GM23248 (cell line): ENCODE measurements at regions of chr6 and their contacts with region 1.

Region 1: GRCh38 chr6:167907837-167908681 is 81.3 kb downstream of the AFDN start:
- DNase-seq: peak; percentile 47
- H3K4me3 ChIP-seq: no peak overlapping the region
- H3K27ac ChIP-seq: no peak overlapping the region
- H3K4me1 ChIP-seq: no peaks in the 10 kb centered on the region
- H3K27me3 ChIP-seq: no peaks in the 10 kb centered on the region

Region 2: DNA sequence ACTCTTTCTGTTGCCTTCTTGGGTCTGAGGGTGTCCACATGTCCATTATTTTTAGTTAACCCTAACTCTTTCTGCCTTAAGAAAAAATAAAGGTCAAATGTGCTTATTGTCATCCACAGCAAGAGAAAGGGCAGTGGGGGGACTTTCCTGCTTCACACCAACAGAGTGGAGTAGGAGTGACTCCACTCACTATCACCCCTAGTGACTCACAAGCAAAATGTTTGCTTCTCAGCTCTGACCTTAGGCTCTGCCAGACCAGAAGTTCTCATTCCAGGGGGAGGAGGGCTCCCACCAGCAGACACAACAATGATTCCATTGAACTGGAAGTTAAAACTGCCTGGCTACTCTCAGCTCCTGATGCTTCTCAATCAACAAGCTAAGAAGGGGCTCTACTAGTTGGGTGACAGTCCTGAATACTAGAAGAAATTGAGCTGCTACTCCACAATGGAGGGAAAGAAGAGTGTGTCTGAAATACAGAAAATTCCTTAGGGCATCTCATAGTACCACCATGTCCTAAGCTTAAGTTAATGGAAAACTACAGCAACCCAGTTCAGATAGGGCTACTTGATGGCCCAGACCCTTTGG is 165.2 kb before region 1 on chr6:
- in situ Hi-C with region 1: no loop called
- DNase-seq: no peak
- H3K4me3 ChIP-seq: no peak overlapping the region
- H3K27ac ChIP-seq: no peak overlapping the region
- H3K4me1 ChIP-seq: no peaks in the 10 kb centered on the region
- H3K27me3 ChIP-seq: no peaks in the 10 kb centered on the region

Region 3: DNA sequence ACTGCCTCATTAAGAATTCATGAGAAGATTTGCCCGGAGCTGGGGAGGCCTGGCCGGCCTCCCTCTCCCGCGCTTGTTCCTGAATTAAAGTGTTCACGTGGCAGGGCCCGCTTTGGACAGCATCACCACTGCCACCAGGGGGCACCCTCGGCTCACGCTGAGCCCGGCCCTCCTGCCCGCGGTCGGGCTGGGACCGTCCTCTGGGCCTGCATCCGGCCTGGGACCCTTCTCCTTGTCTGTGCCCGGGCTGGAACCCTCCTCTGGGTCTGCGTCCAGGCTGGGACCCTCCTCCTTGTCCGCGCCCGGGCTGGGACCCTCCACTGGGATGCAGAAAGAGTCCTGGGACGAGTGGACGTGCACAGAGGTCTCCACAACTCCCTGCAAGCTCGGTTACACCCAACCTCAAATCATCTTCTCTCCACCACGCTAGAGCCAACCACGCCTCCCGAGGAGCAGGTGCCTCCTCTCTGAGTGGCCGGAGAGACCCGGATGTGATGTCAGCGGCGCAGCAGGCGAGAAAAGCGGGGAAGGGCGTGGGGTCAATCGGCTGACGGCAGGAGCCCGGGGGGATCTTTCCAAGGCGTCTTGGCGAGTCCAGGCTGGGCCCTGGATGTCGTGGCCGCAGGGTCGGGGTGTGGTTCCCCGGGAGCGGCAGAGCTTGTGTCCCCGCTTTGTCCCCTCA is 462.4 kb after region 1 on chr6:
- in situ Hi-C with region 1: loop called (anchors 25 kb)
- DNase-seq: peak; percentile 55
- H3K4me3 ChIP-seq: no peak overlapping the region
- H3K27ac ChIP-seq: no peak overlapping the region
- H3K4me1 ChIP-seq: no peaks in the 10 kb centered on the region
- H3K27me3 ChIP-seq: no peaks in the 10 kb centered on the region

Region 4: DNA sequence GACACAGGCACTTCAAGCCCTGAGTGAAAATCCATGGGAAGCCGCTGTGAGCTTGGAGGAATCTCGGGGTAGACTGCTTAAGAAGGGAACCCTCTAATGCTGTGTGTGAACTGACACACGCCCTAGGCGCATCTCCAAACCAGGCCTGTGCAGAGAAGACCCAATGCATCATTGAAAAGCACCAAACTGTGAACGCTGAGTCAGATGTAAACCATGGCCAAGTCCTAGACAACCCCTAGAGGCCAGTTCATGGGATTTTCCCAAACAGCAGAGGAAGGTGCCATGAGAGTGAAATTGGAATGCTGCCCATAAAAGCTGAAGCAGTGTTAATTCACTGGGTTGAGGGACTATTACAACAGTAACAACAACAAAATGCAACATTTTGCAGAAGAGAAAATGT is 829.4 kb after region 1 on chr6:
- in situ Hi-C with region 1: no loop called
- DNase-seq: peak; percentile 4
- H3K4me3 ChIP-seq: no peak overlapping the region
- H3K27ac ChIP-seq: no peak overlapping the region
- H3K4me1 ChIP-seq: no peaks in the 10 kb centered on the region
- H3K27me3 ChIP-seq: no peaks in the 10 kb centered on the region

Region 5: DNA sequence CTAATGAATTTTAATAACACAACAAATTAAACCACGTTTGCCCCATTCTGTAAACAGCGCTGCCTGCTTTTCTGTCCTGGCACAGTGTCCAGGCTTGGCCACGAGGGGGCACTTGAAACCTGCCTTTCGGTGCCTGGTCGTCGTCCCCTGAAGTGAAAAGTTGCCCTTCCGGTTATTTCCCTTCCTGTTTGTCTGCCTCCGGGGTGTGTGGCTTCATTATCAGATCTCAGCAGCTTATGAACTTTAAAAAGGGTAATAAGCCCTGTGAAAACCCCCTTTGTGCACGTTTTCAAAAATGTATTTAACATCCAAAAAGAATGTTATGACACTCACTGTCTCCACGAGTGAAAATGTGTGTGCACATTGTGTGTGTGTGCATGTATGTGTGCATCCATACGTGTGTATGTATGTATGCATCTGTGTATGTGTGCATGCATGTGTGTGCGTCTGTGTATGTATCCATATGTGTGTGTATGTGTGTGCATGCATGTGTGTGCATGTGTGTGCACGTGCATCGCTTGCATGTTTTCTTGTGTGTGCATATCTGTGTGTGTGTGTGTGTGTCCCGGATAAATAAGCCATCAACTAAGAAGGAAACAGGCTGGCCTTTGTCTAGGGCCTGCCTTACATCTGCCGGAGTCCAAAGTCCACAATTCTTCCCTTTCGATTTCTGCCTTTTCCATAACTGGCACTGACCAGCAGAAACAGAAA is 987.2 kb after region 1 on chr6:
- in situ Hi-C with region 1: loop called (anchors 25 kb)
- DNase-seq: peak; percentile 87
- H3K4me3 ChIP-seq: peak overlapping the region; percentile 64
- H3K27ac ChIP-seq: no peak overlapping the region
- H3K4me1 ChIP-seq: peaks cover 4% of the 10 kb centered on the region; the same call in 1 of the 2 replicates
- H3K27me3 ChIP-seq: no peaks in the 10 kb centered on the region